WTC11 (cell line): ENCODE measurements at regions of chr11 and their contacts with region 1.

Region 1: GRCh38 chr11:120303004-120303637 is 22.0 kb upstream of the TLCD5 start:
- DNase-seq: peak; percentile 81
- ATAC-seq: peak; percentile 67
- H3K4me3 Mint-ChIP-seq: no peak overlapping the region
- H3K27ac Mint-ChIP-seq: no peak overlapping the region
- H3K4me1 Mint-ChIP-seq: peaks cover 23% of the 10 kb centered on the region
- H3K27me3 Mint-ChIP-seq: peaks cover 7% of the 10 kb centered on the region
- CTCF ChIP-seq: peak; percentile 79

Region 2: DNA sequence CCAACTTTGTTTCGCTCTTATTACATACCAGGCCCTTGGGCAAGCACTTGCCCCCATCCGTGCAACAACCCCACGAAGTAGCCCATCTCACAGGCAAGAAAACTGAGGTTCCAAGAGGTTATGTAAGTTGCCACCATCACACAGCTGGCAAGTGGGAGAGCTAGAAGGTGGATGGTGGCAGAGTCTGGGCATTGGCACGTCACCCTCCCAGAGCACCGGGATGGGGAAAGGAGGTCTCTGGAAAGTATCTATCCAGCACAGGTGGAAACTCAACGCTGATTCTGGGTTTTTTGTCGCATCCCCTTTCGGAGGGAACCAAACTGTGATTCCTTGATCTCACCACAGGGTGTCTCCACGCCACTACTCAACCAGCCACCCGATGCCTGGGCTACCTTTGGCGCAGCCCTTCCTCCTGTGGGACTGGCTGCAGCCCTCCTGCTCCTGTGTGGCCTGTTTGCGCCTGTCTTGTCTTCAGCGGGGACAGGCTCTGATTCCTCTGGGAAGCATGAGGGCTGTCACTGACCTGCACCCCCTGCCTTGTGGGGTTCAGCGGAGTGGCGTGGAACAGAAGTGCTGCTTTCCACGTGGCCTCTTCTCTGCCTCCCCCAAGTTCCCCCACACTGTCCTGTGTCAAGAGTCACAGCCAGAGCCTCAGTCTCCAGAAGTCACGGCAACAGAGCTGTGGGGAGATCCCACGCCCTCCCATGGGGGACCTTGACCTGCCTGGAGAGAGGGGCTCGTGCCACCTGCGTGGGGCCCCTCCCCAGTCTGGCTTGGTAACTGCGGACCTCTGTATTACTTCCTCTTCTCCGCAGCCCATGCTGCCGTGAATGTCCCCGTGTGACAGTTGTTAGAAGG is 130.8 kb before region 1 on chr11:
- CTCF ChIA-PET with region 1: interaction called, 62 read pairs
- POLR2A ChIA-PET with region 1: interaction called, 3 read pairs
- DNase-seq: peak; percentile 82
- ATAC-seq: peak; percentile 50
- H3K4me3 Mint-ChIP-seq: no peak overlapping the region
- H3K27ac Mint-ChIP-seq: no peak overlapping the region
- H3K4me1 Mint-ChIP-seq: peaks cover 9% of the 10 kb centered on the region; the same call in 1 of the 2 replicates
- H3K27me3 Mint-ChIP-seq: peaks cover 89% of the 10 kb centered on the region
- CTCF ChIP-seq: peak; percentile 27; the same call in 1 of the 2 replicates

Region 3: GRCh38 chr11:120191058-120191457 is 112.1 kb before region 1 on chr11:
- CTCF ChIA-PET with region 1: interaction called, 15 read pairs
- POLR2A ChIA-PET with region 1: no interaction called
- DNase-seq: no peak
- ATAC-seq: no peak; the same call in 1 of the 2 replicates
- H3K4me3 Mint-ChIP-seq: no peak overlapping the region
- H3K27ac Mint-ChIP-seq: no peak overlapping the region
- H3K4me1 Mint-ChIP-seq: peaks cover 26% of the 10 kb centered on the region
- H3K27me3 Mint-ChIP-seq: peaks cover 56% of the 10 kb centered on the region
- CTCF ChIP-seq: no peak

Region 4: DNA sequence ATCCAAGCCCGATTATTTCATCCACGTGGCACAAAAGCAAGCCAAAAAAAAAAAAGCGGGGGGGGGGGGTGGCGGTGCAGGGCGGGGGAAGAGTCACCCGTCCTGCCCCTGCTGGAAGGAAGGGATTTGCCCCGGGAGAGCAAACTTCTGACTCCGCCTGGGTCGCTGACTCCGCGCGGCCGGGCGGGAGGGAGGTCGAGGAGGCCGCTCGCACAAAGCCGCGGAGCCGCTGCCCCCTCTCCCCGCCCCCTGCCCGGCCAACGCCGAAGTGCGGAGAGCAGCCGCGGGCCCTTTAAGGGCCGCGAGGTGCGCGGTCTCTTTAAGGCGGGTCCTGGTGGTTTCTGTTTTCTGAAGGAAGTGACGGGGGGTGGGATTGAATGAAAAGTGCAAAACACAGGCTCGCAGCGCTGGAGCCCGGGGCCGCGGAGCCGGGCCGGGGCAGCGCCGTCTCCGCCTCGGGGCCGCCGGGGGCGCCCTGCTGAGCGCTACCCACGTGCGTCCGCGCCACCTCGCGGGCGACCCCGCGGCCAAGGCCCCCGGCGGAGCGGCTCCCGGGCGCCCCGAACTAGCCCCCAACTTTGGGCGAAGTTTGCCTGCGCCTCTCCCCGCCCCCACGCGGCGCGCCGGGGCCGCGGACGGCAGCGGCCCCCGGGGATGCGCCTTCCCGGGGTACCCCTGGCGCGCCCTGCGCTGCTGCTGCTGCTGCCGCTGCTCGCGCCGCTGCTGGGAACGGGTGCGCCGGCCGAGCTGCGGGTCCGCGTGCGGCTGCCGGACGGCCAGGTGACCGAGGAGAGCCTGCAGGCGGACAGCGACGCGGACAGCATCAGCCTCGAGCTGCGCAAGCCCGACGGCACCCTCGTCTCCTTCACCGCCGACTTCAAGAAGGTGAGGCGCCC is 92.2 kb before region 1 on chr11 and contains the start of gene OAF:
- CTCF ChIA-PET with region 1: interaction called, 14 read pairs
- POLR2A ChIA-PET with region 1: no interaction called
- DNase-seq: peak; percentile 87
- ATAC-seq: peak; percentile 85
- H3K4me3 Mint-ChIP-seq: peak within 1 kb of the TSS; percentile 79
- H3K27ac Mint-ChIP-seq: no peak within 1 kb of the TSS
- H3K4me1 Mint-ChIP-seq: peaks cover 26% of the 10 kb centered on the region
- H3K27me3 Mint-ChIP-seq: peaks cover 94% of the 10 kb centered on the region
- CTCF ChIP-seq: no peak
- total RNA-seq, gene OAF: 3.2 to 5.6 TPM (median 4.2 TPM) in 3 replicates

Region 5: DNA sequence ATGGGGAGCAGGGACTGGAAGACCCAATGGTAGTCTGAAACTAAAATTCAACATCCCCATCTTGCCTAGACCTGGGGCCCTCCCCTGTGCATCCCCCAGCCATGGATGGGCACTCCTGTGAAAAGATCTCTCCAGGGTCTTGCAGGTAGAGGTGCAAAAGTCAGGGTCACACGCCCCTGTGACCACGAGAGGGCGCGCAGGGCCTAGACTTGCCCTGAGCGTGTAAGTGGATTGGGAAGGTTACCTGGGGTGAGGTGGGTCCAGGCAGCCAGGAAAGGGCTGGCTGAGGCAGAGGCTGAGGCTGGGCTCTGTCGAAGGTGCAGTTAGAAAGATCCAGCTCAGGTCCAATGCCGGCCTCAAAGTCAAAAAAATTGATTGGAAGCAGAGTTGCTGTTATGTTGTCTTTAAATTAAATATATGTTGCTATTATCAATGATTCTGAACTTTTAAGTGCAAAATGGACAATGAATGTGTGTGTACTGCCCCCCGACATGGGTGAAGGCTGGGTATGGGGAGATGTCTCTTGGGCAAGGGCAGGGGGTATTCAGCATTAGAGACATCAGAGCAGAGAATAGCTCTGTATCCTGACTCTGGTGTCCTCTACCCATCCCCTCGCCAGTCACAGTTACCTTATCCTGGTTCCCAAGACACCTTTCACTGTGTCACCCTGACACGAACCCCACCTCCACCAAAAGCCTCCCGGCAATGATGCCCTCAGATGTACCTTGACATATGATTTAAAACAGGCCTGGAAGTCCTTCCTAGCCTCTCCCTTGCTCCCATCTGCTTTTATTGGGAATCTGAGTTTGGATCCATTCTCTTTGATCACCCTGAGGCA is 67.9 kb before region 1 on chr11:
- CTCF ChIA-PET with region 1: interaction called, 623 read pairs
- POLR2A ChIA-PET with region 1: interaction called, 14 read pairs
- DNase-seq: peak; percentile 91
- ATAC-seq: peak; percentile 67
- H3K4me3 Mint-ChIP-seq: no peak overlapping the region
- H3K27ac Mint-ChIP-seq: no peak overlapping the region
- H3K4me1 Mint-ChIP-seq: peaks cover 25% of the 10 kb centered on the region
- H3K27me3 Mint-ChIP-seq: peaks cover 31% of the 10 kb centered on the region
- CTCF ChIP-seq: peak; percentile 89

Region 6: DNA sequence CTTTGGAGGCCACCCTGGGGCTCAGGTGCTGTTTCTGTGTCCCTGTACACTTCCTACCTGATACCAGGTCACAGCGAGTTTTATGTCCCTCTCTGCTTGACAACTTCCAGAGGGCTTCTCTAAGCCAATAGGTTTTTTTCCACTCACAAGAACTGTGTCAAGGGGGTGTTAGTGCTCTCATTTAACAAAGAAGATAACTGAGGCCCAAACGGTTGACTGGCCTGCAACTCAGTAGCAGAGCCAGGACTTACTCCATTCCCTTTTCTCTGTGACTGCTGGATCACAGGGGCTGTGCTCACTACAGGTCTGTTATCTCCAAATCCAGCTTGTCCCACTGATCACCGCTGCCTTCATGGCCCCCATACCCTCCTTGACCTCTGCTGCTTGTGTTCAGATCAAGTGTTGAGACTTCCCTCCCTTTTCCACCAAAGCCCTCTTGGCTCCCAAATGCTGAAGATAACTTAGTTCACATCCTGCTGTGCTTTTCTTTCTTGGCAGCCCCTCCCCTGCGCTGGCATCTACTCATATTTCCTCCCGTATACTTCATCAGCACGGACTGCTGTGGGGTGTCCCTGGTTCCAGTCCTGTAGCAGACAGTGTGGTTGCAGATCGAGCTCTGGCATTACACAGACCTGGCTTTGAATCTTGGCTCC is 21.9 kb before region 1 on chr11:
- CTCF ChIA-PET with region 1: interaction called, 29 read pairs
- POLR2A ChIA-PET with region 1: no interaction called
- DNase-seq: no peak
- ATAC-seq: no peak; the same call in 1 of the 2 replicates
- H3K4me3 Mint-ChIP-seq: no peak overlapping the region
- H3K27ac Mint-ChIP-seq: no peak overlapping the region
- H3K4me1 Mint-ChIP-seq: peaks cover 12% of the 10 kb centered on the region
- H3K27me3 Mint-ChIP-seq: no peaks in the 10 kb centered on the region
- CTCF ChIP-seq: no peak

Region 7: GRCh38 chr11:120316842-120317688 is 13.9 kb after region 1 on chr11:
- CTCF ChIA-PET with region 1: interaction called, 25 read pairs
- POLR2A ChIA-PET with region 1: no interaction called
- DNase-seq: peak; percentile 42
- ATAC-seq: peak; percentile 98
- H3K4me3 Mint-ChIP-seq: peak overlapping the region; percentile 57
- H3K27ac Mint-ChIP-seq: peak overlapping the region; percentile 84; the same call in 1 of the 2 replicates
- H3K4me1 Mint-ChIP-seq: peaks cover 19% of the 10 kb centered on the region
- H3K27me3 Mint-ChIP-seq: peaks cover 2% of the 10 kb centered on the region; the same call in 1 of the 2 replicates
- CTCF ChIP-seq: no peak